Cardiac septum (tissue), 1 donor: ENCODE measurements at regions of chr4 and their contacts with region 1.

Region 1: GRCh38 chr4:168710353-168710946 is 213.6 kb downstream of the PALLD start:
- DNase-seq: no peak

Region 2: GRCh38 chr4:168765726-168766125 is 55.3 kb after region 1 on chr4:
- intact Hi-C with region 1: loop called (anchors 1 kb)
- DNase-seq: no peak

Region 3: DNA sequence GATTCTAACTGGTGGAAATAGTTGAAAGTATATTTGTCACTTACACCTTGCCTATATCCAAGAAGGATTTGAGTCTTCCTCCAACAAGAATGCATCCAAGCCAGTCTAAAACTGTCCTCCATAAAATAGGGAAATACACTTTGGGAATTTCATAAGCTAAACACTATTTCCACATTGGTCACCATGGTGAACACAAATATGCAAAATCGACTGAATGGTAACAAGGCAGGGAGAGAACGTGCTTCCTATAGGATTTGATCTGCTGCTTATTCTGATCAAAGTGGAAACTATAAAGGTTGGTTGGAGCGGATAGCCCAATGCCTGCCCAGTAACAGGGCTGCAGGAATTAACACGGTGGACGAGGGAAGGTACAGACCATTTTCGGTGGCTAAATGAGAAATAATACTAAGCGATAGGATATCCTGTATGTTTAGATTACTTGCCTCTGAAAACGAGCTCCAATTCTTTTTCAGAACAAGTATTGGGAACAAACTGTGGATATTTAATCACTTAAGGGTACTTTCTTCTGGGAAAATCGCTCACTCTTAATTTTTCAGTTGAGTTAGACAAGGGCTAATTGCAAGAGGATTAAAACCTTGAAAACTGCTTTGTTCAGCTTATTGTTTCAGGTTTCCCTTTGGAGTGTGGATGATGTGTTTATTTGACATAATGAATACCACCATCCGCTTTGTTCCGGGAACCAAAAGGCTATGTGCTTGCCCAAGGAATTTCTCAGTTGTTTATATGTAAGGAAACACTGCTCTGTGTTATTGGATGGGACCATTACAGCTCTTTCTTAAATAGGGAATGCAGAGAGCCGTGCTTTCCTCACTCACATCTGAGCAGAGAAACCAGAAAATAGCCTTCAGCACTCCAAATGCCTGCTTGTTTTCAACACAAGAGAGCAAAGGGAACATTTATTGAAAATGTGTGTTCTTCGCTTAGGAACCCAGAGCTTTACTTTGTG is 105.2 kb after region 1 on chr4:
- intact Hi-C with region 1: loop called (anchors 5 kb)
- DNase-seq: no peak

Region 4: GRCh38 chr4:168831919-168832762 is 121.7 kb after region 1 on chr4:
- intact Hi-C with region 1: loop called (anchors 5 kb)
- DNase-seq: peak; percentile 86

Region 5: GRCh38 chr4:168917138-168917779 is 206.8 kb after region 1 on chr4:
- intact Hi-C with region 1: loop called (anchors 2 kb)
- DNase-seq: no peak

Region 6: GRCh38 chr4:169010125-169011023 is 299.9 kb after region 1 on chr4 and contains the start of gene CBR4:
- intact Hi-C with region 1: loop called (anchors 10 kb)
- DNase-seq: peak; percentile 99
- total RNA-seq, gene CBR4: 21.3 TPM